ENCODE measurements at regions of chr3 and their contacts with region 1.

Region 1: DNA sequence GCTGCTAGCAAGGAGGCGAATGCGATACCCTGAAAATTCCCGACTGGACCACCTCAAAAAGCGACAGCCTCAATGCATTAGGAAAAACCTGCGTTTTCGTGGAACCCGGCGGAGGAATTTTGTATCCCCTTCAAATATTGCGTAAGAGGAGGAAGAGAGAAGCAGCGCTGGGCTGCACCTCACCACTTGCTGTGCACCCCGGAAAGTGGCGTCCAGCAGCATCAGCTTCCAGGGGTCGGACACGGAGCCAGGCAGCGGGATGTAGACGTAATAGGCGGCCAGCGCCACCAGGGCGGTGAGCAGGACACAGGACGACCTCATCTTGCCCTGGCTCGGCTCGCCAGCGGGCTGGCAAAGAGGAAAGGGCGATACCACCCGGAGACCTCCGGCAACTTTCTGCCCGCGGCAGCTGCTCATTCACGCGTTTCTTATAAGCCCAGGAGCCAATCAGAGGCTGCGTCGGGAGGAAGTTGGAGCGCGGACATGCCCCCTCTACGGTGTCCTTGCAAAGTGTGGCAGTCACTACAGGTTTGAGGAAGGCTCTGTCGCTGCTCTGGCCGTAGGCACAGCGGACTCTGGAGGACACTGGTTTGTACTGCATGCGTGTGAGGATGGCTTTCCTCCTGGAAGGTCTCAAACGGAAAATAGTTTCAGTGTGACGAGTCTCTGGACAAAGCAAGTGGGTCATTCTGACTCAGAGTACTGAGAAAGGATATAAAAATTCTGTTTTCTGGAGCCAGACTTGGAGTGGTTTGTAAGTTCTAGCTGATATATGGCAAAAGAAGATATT is at the start of gene NCEH1:
- DNase-seq: peak; percentile 72
- H3K4me3 Mint-ChIP-seq: peak within 1 kb of the TSS; percentile 88
- H3K27ac Mint-ChIP-seq: peak within 1 kb of the TSS; percentile 27
- H3K4me1 Mint-ChIP-seq: peaks cover 19% of the 10 kb centered on the region
- H3K27me3 Mint-ChIP-seq: peaks cover 5% of the 10 kb centered on the region
- total RNA-seq, gene NCEH1: 9.6 and 10.0 TPM in 2 replicates

Region 2: GRCh38 chr3:172673210-172673679 is 37.6 kb before region 1 on chr3:
- intact Hi-C with region 1: loop called (anchors 1 kb)
- DNase-seq: peak; percentile 60
- H3K4me3 Mint-ChIP-seq: no peak overlapping the region
- H3K27ac Mint-ChIP-seq: no peak overlapping the region
- H3K4me1 Mint-ChIP-seq: peaks cover 15% of the 10 kb centered on the region
- H3K27me3 Mint-ChIP-seq: no peaks in the 10 kb centered on the region

Region 3: DNA sequence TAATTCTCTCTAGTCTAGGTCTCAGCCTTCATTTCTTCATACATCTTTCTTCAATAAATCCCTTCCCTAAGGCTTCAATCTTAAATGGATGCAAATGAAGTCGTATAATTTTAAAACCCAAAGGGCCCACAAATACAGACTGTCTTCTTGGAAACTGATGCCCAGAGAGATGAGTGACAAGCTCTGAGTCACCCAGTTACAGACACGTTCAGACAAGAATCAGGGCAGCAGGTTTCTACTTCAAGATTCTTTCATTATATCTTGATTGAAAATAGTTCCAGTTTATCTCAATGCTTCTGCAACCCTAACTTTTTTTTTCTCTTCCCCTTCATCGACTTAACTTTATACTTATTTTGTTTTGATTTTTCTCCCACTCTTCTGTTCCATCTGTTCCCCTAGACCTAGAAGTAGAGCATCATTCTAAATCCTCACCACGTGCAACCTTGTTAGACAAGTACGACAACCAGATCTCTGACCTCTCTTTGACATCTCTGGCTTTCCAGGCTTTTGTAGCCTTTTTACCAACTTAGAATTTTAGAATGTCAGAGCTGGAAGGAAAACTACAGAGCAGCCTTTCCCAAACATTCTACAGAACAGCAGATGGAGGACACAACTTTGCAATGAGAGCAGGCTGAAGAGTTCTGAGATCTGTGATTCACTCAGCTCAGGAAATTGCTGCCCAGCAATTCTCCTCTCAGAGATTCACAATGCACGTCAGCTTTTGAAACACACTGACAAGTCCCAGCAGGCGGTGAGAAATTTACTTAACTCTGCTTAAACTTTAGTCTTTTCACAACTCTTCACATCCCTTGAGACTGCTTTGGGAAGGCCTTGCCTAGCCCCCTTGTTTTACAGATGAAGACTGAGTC is 25.3 kb before region 1 on chr3:
- intact Hi-C with region 1: loop called (anchors 2 kb)
- DNase-seq: no peak
- H3K4me3 Mint-ChIP-seq: peak overlapping the region; percentile 24
- H3K27ac Mint-ChIP-seq: peak overlapping the region; percentile 77
- H3K4me1 Mint-ChIP-seq: peaks cover 23% of the 10 kb centered on the region
- H3K27me3 Mint-ChIP-seq: no peaks in the 10 kb centered on the region

Region 4: GRCh38 chr3:172750368-172751174 is 39.7 kb after region 1 on chr3 and contains the start of gene ECT2:
- intact Hi-C with region 1: loop called (anchors 1 kb)
- DNase-seq: peak; percentile 98
- H3K4me3 Mint-ChIP-seq: peak within 1 kb of the TSS; percentile 97
- H3K27ac Mint-ChIP-seq: peak within 1 kb of the TSS; percentile 95
- H3K4me1 Mint-ChIP-seq: peaks cover 31% of the 10 kb centered on the region
- H3K27me3 Mint-ChIP-seq: peaks cover 10% of the 10 kb centered on the region
- total RNA-seq, gene ECT2: 39.5 and 40.3 TPM in 2 replicates